ENCODE measurements at regions of chr20 and their contacts with region 1.

Region 1: GRCh38 chr20:2172305-2173175 is 70.9 kb downstream of the STK35 start:
- DNase-seq: peak in 1 of 2 experiments; percentile 87
- H3K4me3 ChIP-seq: peak overlapping the region in 1 of 4 experiments; percentile 48; a peak in 1 of 8 replicates
- H3K27ac ChIP-seq: no peak overlapping the region
- H3K4me1 ChIP-seq: no peaks in the 10 kb centered on the region
- H3K27me3 ChIP-seq: no peaks in the 10 kb centered on the region; a peak in 1 of 7 replicates
- CTCF ChIP-seq: peak; percentile 80 to 93 (median 84)
- EP300 ChIP-seq: no peak
- POLR2A ChIP-seq: no peak
- RAD21 ChIP-seq: peak; percentile 95 to 97

Region 2: GRCh38 chr20:2093159-2093781 is 79.3 kb before region 1 on chr20:
- CTCF ChIA-PET with region 1: interaction called, 38 read pairs
- POLR2A ChIA-PET with region 1: no interaction called
- DNase-seq: peak in 1 of 2 experiments; percentile 58
- H3K4me3 ChIP-seq: no peak overlapping the region
- H3K27ac ChIP-seq: no peak overlapping the region
- H3K4me1 ChIP-seq: peaks cover 0 to 10% (median 7%) of the 10 kb centered on the region in 4 experiments; a peak in 4 of 7 replicates
- H3K27me3 ChIP-seq: no peaks in the 10 kb centered on the region; a peak in 1 of 7 replicates
- CTCF ChIP-seq: peak; percentile 82 to 89 (median 86)
- EP300 ChIP-seq: no peak
- POLR2A ChIP-seq: no peak
- RAD21 ChIP-seq: peak; percentile 91 to 94

Region 3: GRCh38 chr20:2151858-2152281 is 20.7 kb before region 1 on chr20:
- CTCF ChIA-PET with region 1: interaction called, 17 read pairs
- POLR2A ChIA-PET with region 1: no interaction called
- DNase-seq: no peak
- H3K4me3 ChIP-seq: no peak overlapping the region
- H3K27ac ChIP-seq: no peak overlapping the region
- H3K4me1 ChIP-seq: peaks cover 2 to 6% (median 4%) of the 10 kb centered on the region in 4 experiments; a peak in 5 of 7 replicates
- H3K27me3 ChIP-seq: no peaks in the 10 kb centered on the region
- CTCF ChIP-seq: no peak
- EP300 ChIP-seq: no peak
- POLR2A ChIP-seq: no peak
- RAD21 ChIP-seq: no peak

Region 4: GRCh38 chr20:2162125-2162822 is 10.3 kb before region 1 on chr20:
- CTCF ChIA-PET with region 1: interaction called, 12 read pairs
- POLR2A ChIA-PET with region 1: no interaction called
- DNase-seq: no peak
- H3K4me3 ChIP-seq: no peak overlapping the region
- H3K27ac ChIP-seq: no peak overlapping the region
- H3K4me1 ChIP-seq: no peaks in the 10 kb centered on the region; a peak in 1 of 7 replicates
- H3K27me3 ChIP-seq: no peaks in the 10 kb centered on the region
- CTCF ChIP-seq: no peak
- EP300 ChIP-seq: no peak
- POLR2A ChIP-seq: no peak
- RAD21 ChIP-seq: no peak